OCI-LY7 (cell line): ENCODE measurements at regions of chr3 and their contacts with region 1.

Region 1: GRCh38 chr3:18027161-18027939 is 284.9 kb upstream of the TBC1D5 start:
- DNase-seq: no peak
- H3K4me3 ChIP-seq: no peak overlapping the region
- H3K27ac ChIP-seq: no peak overlapping the region
- H3K4me1 ChIP-seq: no peaks in the 10 kb centered on the region
- CTCF ChIP-seq: no peak

Region 2: DNA sequence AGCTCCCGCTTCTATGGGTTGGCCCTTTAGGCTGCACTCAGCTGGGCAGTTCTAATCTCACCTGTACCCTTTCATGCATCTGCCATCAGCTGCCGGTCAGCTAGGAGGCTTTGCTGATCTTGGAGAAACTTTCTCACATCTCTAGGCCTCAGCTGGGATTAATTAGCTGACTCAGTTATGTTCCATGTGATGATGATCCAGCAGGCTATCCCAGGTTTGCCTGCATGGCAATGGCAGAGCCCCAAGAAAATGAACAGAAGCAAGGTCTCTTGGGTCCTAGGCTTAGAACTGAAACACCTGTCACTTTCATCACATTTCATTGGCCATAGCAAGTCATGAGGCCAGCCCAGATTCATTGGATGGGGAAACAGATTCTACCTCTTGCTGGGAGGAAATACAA is 19.7 kb after region 1 on chr3:
- CTCF ChIA-PET with region 1: no interaction called
- POLR2A ChIA-PET with region 1: interaction called, 10 read pairs
- intact Hi-C with region 1: no loop called
- DNase-seq: no peak
- H3K4me3 ChIP-seq: no peak overlapping the region
- H3K27ac ChIP-seq: no peak overlapping the region
- H3K4me1 ChIP-seq: peaks cover 15% of the 10 kb centered on the region
- CTCF ChIP-seq: no peak